ENCODE measurements at regions of chr10 and their contacts with region 1.

Region 1: DNA sequence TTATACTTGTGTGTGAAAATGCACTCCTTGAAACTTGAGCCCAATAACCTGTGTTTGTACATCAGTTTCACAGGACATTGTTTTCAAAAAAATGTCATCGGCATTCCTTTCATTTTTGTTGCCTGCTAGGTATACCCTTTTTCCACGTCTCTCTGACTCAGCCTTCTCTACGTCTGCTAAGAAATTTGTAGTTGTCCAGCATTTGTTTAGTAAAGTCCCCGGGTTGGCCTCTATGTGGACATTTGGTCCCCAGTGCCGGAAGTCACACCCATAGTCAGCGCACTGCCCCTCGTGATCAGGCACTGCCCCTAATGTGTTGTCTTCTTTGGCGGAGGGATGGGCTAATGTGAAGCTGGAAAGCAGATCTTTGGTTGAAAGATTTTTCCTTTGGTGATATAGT is 222.3 kb downstream of the LRMDA start:
- DNase-seq: no peak
- H3K4me3 ChIP-seq: no peak overlapping the region
- H3K27ac ChIP-seq: no peak overlapping the region
- H3K4me1 ChIP-seq: no peaks in the 10 kb centered on the region
- H3K27me3 ChIP-seq: peaks cover 14% of the 10 kb centered on the region
- CTCF ChIP-seq: no peak

Region 2: DNA sequence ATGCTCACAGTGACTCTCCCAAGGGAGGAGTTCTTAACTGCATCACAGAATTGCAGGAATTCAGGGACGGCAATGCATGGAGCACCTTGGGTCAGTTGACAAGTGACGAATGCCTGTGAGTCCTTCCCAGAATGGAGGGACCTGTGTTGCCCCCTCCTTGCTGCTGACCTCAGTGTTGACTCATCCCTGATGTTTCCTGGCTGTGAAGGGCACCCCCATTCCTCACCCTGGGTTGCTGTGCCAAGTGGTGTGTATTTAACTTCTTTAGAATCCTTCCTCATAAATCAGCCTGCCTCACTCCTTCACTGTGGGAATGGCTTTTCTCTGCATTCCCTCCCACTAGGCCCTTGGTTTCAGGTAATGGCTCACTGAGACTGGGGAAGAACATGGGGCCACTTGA is 123.4 kb before region 1 on chr10:
- CTCF ChIA-PET with region 1: no interaction called
- POLR2A ChIA-PET with region 1: no interaction called
- intact Hi-C with region 1: no loop called
- DNase-seq: no peak
- H3K4me3 ChIP-seq: no peak overlapping the region
- H3K27ac ChIP-seq: no peak overlapping the region
- H3K4me1 ChIP-seq: no peaks in the 10 kb centered on the region
- H3K27me3 ChIP-seq: peaks cover 27% of the 10 kb centered on the region
- CTCF ChIP-seq: no peak

Region 3: GRCh38 chr10:75694790-75695189 is 41.0 kb after region 1 on chr10:
- CTCF ChIA-PET with region 1: no interaction called
- POLR2A ChIA-PET with region 1: no interaction called
- intact Hi-C with region 1: loop called (anchors 1 kb)
- DNase-seq: no peak
- H3K4me3 ChIP-seq: no peak overlapping the region
- H3K27ac ChIP-seq: no peak overlapping the region
- H3K4me1 ChIP-seq: no peaks in the 10 kb centered on the region
- H3K27me3 ChIP-seq: peaks cover 18% of the 10 kb centered on the region
- CTCF ChIP-seq: no peak

Measured in A673 (cell line).